ENCODE measurements at regions of chr7 and their contacts with region 1.

Region 1: DNA sequence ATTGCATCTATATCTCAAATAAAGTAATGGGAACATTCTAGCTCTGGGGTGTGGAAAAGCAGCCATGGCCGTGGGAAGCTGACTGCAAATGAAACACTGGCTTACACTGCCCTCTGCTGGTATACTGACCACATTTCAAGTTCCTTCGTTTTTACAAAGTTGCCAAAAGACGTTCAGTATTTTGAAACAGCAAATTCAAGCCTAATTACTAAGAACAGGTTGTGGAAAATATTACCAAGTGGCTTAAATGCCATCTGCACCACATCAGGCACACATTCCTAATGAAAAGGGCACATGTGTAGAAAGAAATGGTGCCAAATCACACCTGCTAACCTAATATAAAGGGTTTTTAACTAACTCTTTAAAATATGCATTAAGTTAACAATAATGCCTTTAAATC is 83.9 kb downstream of the JAZF1 start:
- DNase-seq: no peak
- H3K4me3 ChIP-seq: no peak overlapping the region
- H3K27ac ChIP-seq: no peak overlapping the region
- H3K4me1 ChIP-seq: peaks cover 0 to 3% (median 2%) of the 10 kb centered on the region in 4 experiments; a peak in 4 of 7 replicates
- H3K27me3 ChIP-seq: no peaks in the 10 kb centered on the region
- CTCF ChIP-seq: peak; percentile 55 to 83 (median 71)
- EP300 ChIP-seq: no peak
- POLR2A ChIP-seq: no peak
- RAD21 ChIP-seq: peak; percentile 71 to 82

Region 2: DNA sequence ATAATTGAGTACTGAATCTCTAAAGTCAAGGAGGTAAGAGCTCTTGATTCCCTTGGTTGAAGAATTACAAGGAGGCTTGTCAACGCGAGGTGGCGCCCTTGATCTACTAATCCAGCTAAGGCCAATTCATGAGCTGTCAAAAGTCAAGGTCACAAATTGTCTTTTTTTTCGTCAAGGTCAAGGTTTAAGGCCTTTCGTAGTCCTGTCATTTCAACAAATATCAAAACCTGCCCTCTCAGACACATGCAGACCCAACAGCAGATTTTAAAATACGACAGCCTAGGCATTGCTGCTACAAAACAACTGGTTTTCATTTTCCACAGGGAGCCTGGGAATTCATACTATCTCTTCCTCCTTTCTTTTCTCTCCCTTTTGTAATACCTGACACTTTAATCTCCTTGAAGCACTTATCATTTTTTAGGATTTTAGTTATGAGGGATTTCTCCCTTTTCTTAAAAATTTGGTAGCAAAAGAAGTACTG is 900.4 kb before region 1 on chr7:
- CTCF ChIA-PET with region 1: interaction called, 23 read pairs
- POLR2A ChIA-PET with region 1: no interaction called
- DNase-seq: peak in 1 of 2 experiments; percentile 90
- H3K4me3 ChIP-seq: no peak overlapping the region
- H3K27ac ChIP-seq: no peak overlapping the region
- H3K4me1 ChIP-seq: peaks cover 0 to 6% (median 4%) of the 10 kb centered on the region in 4 experiments; a peak in 4 of 7 replicates
- H3K27me3 ChIP-seq: peaks cover 83 to 100% (median 95%) of the 10 kb centered on the region in 4 experiments
- CTCF ChIP-seq: peak; percentile 9 to 82 (median 76)
- EP300 ChIP-seq: no peak
- POLR2A ChIP-seq: no peak
- RAD21 ChIP-seq: peak; percentile 96 to 97

Region 3: GRCh38 chr7:28037220-28038010 is 59.3 kb before region 1 on chr7:
- CTCF ChIA-PET with region 1: interaction called, 36 read pairs
- POLR2A ChIA-PET with region 1: interaction called, 3 read pairs
- DNase-seq: no peak
- H3K4me3 ChIP-seq: no peak overlapping the region
- H3K27ac ChIP-seq: no peak overlapping the region
- H3K4me1 ChIP-seq: peaks cover 0 to 3% (median under 1%) of the 10 kb centered on the region in 4 experiments; a peak in 2 of 7 replicates
- H3K27me3 ChIP-seq: no peaks in the 10 kb centered on the region
- CTCF ChIP-seq: no peak
- EP300 ChIP-seq: no peak
- POLR2A ChIP-seq: no peak
- RAD21 ChIP-seq: no peak

Region 4: GRCh38 chr7:28062197-28062991 is 34.3 kb before region 1 on chr7:
- CTCF ChIA-PET with region 1: interaction called, 181 read pairs
- POLR2A ChIA-PET with region 1: interaction called, 3 read pairs
- DNase-seq: peak in 1 of 2 experiments; percentile 86
- H3K4me3 ChIP-seq: no peak overlapping the region
- H3K27ac ChIP-seq: no peak overlapping the region
- H3K4me1 ChIP-seq: peaks cover 2 to 7% (median 3%) of the 10 kb centered on the region in 4 experiments; a peak in 6 of 7 replicates
- H3K27me3 ChIP-seq: no peaks in the 10 kb centered on the region
- CTCF ChIP-seq: peak; percentile 62 to 92 (median 75)
- EP300 ChIP-seq: no peak
- POLR2A ChIP-seq: no peak
- RAD21 ChIP-seq: peak; percentile 70 to 80

Region 5: GRCh38 chr7:28078036-28078901 is 18.4 kb before region 1 on chr7:
- CTCF ChIA-PET with region 1: interaction called, 108 read pairs
- POLR2A ChIA-PET with region 1: no interaction called
- DNase-seq: no peak
- H3K4me3 ChIP-seq: no peak overlapping the region
- H3K27ac ChIP-seq: no peak overlapping the region
- H3K4me1 ChIP-seq: peaks cover 0 to 4% (median 0%) of the 10 kb centered on the region in 4 experiments; a peak in 2 of 7 replicates
- H3K27me3 ChIP-seq: no peaks in the 10 kb centered on the region
- CTCF ChIP-seq: peak; percentile 6 to 97 (median 77)
- EP300 ChIP-seq: no peak
- POLR2A ChIP-seq: no peak
- RAD21 ChIP-seq: peak; percentile 65 to 68

Region 6: GRCh38 chr7:28272461-28272877 is 175.8 kb after region 1 on chr7:
- CTCF ChIA-PET with region 1: no interaction called
- POLR2A ChIA-PET with region 1: no interaction called
- DNase-seq: peak in 1 of 2 experiments; percentile 44
- H3K4me3 ChIP-seq: no peak overlapping the region
- H3K27ac ChIP-seq: no peak overlapping the region
- H3K4me1 ChIP-seq: peaks cover 0 to 3% (median under 1%) of the 10 kb centered on the region in 4 experiments; a peak in 3 of 7 replicates
- H3K27me3 ChIP-seq: no peaks in the 10 kb centered on the region
- CTCF ChIP-seq: peak; percentile 70 to 77 (median 75)
- EP300 ChIP-seq: no peak
- POLR2A ChIP-seq: no peak
- RAD21 ChIP-seq: peak; percentile 55 to 72